HAP-1 (cell line): ENCODE measurements at regions of chr4 and their contacts with region 1.

Region 1: GRCh38 chr4:156677131-156677531 is 294.5 kb downstream of the PDGFC start:
- DNase-seq: peak; percentile 56 to 57
- H3K4me3 ChIP-seq: no peak overlapping the region
- H3K4me1 ChIP-seq: peaks cover 12% of the 10 kb centered on the region
- H3K27me3 ChIP-seq: no peaks in the 10 kb centered on the region

Region 2: DNA sequence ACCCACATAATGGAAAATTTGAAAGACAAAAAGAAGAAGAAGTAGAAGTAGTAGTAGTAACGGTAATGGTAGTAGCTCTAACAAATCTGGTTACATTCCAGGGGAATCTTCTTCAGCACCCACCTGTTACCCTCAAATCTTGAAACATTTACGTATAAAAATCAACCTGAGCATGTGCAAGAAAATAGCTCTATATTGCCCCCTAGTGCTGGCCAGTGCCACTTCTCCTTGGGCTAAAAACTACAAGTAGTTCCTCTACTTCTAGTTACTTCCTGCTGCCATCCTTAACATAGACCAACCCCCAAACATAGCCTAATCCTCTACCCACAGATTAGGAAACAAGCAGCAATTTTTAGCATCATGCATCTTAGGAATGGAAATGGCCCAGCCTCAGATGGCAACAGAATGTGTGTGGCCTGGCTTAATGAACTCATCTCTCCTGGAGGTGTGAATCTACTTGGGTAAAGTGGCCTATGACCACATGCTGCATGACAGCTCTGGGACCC is 291.4 kb after region 1 on chr4:
- in situ Hi-C with region 1: loop called (anchors 25 kb)
- DNase-seq: peak; percentile 84 to 88
- H3K4me3 ChIP-seq: peak overlapping the region; percentile 61
- H3K4me1 ChIP-seq: peaks cover 25% of the 10 kb centered on the region
- H3K27me3 ChIP-seq: no peaks in the 10 kb centered on the region